Sigmoid colon (tissue), 7 donors: ENCODE measurements at regions of chr18 and their contacts with region 1.

Region 1: DNA sequence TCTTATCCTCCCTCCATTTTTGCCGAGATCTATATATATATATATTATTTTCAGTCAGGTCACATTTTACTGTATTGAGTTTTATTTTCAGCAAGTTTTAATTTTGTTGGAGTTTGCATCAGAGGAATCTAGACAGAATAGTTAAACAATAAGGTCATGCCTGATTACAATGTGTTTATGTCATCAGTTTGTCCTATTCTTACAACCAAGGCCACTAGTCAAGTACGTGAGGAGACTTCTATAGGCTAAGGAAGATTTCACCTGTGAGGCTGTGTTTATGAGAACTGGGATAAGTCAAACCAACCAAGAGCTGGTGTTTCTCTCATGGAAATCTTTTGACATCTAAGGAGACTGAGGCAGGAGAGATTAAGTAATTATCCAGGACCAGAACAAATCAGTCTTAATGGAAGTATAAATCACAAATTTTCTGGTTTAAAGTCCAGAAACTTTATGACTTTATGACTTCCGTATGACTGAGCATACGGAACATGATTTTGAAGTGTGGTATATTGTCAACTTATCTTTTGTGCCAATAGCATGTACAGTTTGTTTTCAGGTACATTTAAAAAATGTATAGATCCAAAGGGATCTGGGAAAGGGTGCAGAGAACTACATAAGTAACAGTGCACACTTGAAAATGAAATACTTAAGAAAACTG is 100.0 kb upstream of the DTNA start:
- DNase-seq: no peak
- H3K4me3 ChIP-seq: no peak overlapping the region
- H3K27ac ChIP-seq: no peak overlapping the region
- H3K4me1 ChIP-seq: peaks cover 0 to 33% (median 15%) of the 10 kb centered on the region in 4 donors
- H3K27me3 ChIP-seq: no peaks in the 10 kb centered on the region
- CTCF ChIP-seq: no peak
- EP300 ChIP-seq: no peak
- POLR2A ChIP-seq: no peak

Region 2: GRCh38 chr18:34707670-34708069 is 97.5 kb after region 1 on chr18:
- intact Hi-C with region 1: loop called (anchors 5 kb)
- DNase-seq: peak; percentile 81
- H3K4me3 ChIP-seq: no peak overlapping the region
- H3K27ac ChIP-seq: peak overlapping the region; percentile 74 to 88 (median 79)
- H3K4me1 ChIP-seq: peaks cover 0 to 58% (median 49%) of the 10 kb centered on the region in 4 donors
- H3K27me3 ChIP-seq: no peaks in the 10 kb centered on the region
- CTCF ChIP-seq: no peak
- EP300 ChIP-seq: no peak
- POLR2A ChIP-seq: no peak

Region 3: DNA sequence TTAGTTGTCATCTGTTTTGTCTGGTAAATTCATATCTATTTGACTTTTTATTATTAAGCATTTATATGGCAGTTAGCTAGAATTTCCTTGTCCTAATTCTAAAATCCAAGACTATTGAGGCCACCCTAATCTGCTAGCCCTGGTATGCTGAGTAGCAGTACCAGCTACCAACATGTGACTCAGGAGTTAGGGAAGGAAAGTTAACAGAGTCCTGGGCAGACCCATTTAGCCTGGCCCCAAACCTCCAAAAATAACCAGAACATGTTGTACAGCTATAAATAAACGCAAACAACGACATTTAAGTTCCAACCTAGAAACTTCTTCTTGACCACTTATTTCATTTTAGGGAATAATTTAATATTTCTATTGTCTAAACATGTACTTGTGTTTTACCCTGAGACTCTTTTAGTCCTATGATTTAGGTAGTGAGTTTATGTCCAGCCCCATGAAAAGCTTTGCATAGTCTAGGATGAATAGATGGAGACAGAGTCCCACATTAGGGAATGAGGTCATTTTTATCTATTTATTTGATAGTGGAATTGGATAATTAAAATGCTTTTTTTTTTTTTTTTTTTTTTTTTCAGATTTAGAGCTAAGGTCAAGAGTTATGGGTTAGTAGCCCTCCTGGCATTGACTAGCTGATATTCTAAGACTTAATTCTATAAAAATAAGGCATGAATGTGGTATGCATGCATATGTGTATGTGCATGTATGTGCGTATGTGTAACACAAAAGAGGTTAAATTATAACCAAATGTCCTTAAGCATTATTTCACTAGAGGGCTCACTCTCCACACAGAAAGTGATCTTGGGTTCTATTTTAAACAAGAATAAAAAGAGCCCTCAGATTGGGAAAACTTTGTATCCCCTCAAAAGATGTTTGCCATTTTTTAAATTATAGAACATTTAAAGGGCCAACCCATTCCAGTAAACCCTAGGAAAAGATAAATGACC is 271.0 kb after region 1 on chr18:
- intact Hi-C with region 1: no loop called
- DNase-seq: no peak
- H3K4me3 ChIP-seq: no peak overlapping the region
- H3K27ac ChIP-seq: peak overlapping the region; percentile 36 to 76 (median 66)
- H3K4me1 ChIP-seq: peaks cover 0 to 23% (median 16%) of the 10 kb centered on the region in 4 donors
- H3K27me3 ChIP-seq: no peaks in the 10 kb centered on the region
- CTCF ChIP-seq: no peak
- EP300 ChIP-seq: peak in 1 of 4 donors; percentile 28
- POLR2A ChIP-seq: no peak

Region 4: DNA sequence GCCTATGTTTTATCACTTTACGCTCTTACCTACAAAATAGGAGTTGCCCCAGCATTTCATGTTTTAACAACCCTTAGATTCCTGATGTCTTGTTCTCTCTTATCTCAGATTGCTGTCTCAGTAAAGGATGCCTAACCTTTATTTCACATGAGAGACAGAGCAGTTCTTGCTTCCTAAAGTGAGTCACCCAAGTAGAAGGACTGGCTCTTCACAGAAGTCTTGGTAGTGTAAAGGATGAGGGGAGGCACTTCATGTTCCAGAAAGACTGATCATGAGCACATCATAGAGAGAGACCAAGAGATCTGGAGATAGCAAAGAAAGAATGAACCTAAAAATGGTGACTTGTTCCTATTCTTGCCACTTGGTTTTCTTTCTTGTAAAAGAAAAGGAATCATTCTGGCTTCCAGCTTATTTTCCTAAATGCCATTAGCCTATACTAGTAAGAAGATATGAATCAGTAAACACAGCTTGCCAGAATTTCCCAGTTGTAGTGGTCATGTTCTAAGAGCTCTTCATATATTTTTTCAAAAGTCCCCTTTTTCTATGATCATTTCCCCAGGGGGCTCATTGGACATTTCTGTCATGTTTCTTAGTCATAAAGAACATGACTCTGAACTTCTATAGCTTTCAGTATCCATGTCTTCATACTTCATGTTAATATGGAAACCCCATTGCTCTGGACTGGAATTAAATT is 486.0 kb after region 1 on chr18:
- intact Hi-C with region 1: no loop called
- DNase-seq: no peak
- H3K4me3 ChIP-seq: no peak overlapping the region
- H3K27ac ChIP-seq: no peak overlapping the region
- H3K4me1 ChIP-seq: no peaks in the 10 kb centered on the region
- H3K27me3 ChIP-seq: no peaks in the 10 kb centered on the region
- CTCF ChIP-seq: no peak
- EP300 ChIP-seq: no peak
- POLR2A ChIP-seq: no peak